Calu3 (cell line): ENCODE measurements at regions of chr15 and their contacts with region 1.

Region 1: DNA sequence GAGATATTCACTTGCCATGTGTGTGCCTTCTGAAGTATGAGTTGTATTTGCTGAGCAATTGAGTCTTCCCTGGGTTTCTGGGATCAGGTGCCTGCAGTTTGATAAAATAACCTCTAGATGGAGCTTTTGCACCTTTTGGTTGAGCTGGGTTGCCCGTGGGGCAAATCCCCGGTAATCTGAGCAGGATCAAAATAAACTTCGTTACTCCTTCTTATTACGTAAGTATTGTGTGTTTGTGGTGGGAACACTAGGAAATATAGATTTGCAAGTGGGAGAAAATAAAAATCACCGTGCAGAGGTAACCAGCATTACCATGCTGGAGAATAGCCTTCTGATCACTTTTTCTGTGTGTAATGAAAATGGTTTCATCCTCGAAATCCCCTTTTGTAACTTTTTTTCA is 277.4 kb upstream of the NR2E3 start:
- DNase-seq: peak; percentile 52
- H3K4me3 Mint-ChIP-seq: no peak overlapping the region
- H3K27ac Mint-ChIP-seq: no peak overlapping the region
- H3K4me1 Mint-ChIP-seq: peaks cover 30% of the 10 kb centered on the region
- H3K27me3 Mint-ChIP-seq: no peaks in the 10 kb centered on the region
- CTCF ChIP-seq: peak; percentile 80

Region 2: GRCh38 chr15:70149667-70150404 is 1383.2 kb before region 1 on chr15:
- CTCF ChIA-PET with region 1: interaction called, 10 read pairs
- intact Hi-C with region 1: no loop called
- DNase-seq: no peak
- H3K4me3 Mint-ChIP-seq: no peak overlapping the region
- H3K27ac Mint-ChIP-seq: no peak overlapping the region
- H3K4me1 Mint-ChIP-seq: no peaks in the 10 kb centered on the region
- H3K27me3 Mint-ChIP-seq: peaks cover 38% of the 10 kb centered on the region
- CTCF ChIP-seq: no peak

Region 3: GRCh38 chr15:71448688-71449114 is 84.3 kb before region 1 on chr15:
- CTCF ChIA-PET with region 1: interaction called, 3 read pairs
- intact Hi-C with region 1: loop called (anchors 5 kb)
- DNase-seq: peak; percentile 72
- H3K4me3 Mint-ChIP-seq: no peak overlapping the region
- H3K27ac Mint-ChIP-seq: no peak overlapping the region
- H3K4me1 Mint-ChIP-seq: no peaks in the 10 kb centered on the region
- H3K27me3 Mint-ChIP-seq: no peaks in the 10 kb centered on the region
- CTCF ChIP-seq: peak; percentile 73

Region 4: DNA sequence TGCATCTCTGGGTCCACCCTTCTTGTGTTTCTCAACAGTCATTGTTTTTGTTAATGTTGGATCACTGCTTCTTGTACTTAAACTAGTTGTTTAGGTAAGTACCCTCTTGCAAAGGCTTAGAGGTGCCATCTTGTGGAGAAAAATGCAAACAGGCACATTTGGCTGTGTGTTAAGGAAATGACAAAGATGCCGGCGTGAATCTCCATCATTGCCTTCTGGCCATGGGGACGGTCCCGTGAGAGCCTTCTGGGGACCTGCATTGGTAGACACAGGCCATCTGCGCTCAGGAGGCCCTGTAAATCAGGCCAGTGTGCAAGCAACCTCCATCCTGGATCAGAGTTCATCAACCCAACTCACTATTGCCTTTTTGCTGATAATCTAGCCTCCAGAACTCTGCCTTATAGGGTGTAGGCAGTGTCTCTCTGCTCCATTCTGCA is 118.8 kb after region 1 on chr15:
- CTCF ChIA-PET with region 1: no interaction called
- intact Hi-C with region 1: loop called (anchors 1 kb)
- DNase-seq: peak; percentile 44
- H3K4me3 Mint-ChIP-seq: no peak overlapping the region
- H3K27ac Mint-ChIP-seq: no peak overlapping the region
- H3K4me1 Mint-ChIP-seq: peaks cover 7% of the 10 kb centered on the region
- H3K27me3 Mint-ChIP-seq: no peaks in the 10 kb centered on the region
- CTCF ChIP-seq: no peak

Region 5: GRCh38 chr15:71939981-71940588 is 407.1 kb after region 1 on chr15:
- CTCF ChIA-PET with region 1: no interaction called
- intact Hi-C with region 1: no loop called
- DNase-seq: no peak
- H3K4me3 Mint-ChIP-seq: no peak overlapping the region
- H3K27ac Mint-ChIP-seq: no peak overlapping the region
- H3K4me1 Mint-ChIP-seq: no peaks in the 10 kb centered on the region
- H3K27me3 Mint-ChIP-seq: no peaks in the 10 kb centered on the region
- CTCF ChIP-seq: no peak